Ascending aorta (tissue), 2 donors: ENCODE measurements at regions of chr10 and their contacts with region 1.

Region 1: DNA sequence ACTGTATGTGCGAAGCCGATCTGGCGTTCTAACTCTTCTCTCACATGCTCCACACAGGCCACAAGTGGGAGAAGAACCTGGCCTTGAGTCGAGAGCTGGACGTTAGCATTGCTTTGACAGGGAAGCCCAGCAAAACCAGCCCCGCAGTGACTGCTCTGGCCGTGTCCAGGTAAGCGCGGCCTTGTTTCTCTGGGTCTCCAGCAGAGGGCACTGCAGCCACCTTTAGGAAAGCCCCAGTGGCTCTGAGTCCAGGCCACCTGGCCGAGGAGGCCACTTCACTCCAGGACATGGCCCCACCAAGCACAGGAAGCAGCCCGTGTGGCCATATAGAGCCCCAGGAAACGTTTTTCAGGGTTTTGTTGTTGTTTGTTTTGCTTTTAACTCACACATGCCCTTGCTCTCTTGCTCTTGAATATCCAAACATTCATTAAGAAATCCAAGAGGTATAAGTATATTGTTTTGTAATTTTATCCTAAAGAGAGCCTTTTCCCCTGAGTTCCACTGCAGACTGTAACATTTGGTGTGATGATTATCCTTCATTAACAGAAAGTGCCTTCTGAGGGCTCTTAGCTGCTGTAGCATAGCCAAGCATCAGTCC is 41.8 kb upstream of the LRRC18 start:
- DNase-seq: peak in 1 of 2 donors; percentile 71
- H3K4me3 ChIP-seq: no peak overlapping the region
- H3K27ac ChIP-seq: no peak overlapping the region
- H3K4me1 ChIP-seq: peaks cover 0 to 3% of the 10 kb centered on the region in 2 donors
- H3K27me3 ChIP-seq: no peaks in the 10 kb centered on the region
- CTCF ChIP-seq: peak; percentile 80 to 91 (median 83)

Region 2: DNA sequence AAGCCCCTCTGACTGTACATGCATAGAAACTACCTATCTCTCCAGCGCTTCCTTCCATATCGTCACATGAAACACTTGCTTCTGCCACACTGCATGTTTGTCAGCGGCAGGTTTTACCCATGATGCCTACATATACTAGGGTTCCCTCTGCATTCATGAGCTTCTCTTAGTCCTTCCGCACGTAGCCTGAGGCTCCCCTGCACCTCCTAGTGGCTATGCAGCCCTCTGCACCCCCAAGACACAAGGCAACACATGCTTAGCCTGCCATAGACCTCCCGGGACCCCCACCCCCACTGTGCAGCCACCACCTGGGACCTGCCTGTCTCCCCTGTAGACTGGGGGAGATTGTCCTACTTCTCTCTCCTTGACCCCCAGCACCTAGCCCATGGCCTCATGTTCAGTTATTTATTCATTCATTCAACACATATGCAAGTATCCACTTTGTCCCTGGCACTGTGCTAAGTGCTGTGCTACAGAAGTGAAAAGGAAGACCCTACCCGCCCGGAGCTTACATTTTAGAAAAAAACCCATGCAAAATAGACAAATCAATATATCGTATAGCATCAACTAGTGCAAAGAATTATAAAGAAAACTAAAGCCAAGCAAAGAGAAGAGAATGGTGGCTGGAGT is 183.3 kb after region 1 on chr10:
- intact Hi-C with region 1: loop called (anchors 1 kb)
- DNase-seq: no peak
- H3K4me3 ChIP-seq: no peak overlapping the region
- H3K27ac ChIP-seq: no peak overlapping the region
- H3K4me1 ChIP-seq: no peaks in the 10 kb centered on the region
- H3K27me3 ChIP-seq: no peaks in the 10 kb centered on the region
- CTCF ChIP-seq: peak; percentile 47 to 67 (median 59)